ENCODE measurements at regions of chr3 and their contacts with region 1.

Region 1: DNA sequence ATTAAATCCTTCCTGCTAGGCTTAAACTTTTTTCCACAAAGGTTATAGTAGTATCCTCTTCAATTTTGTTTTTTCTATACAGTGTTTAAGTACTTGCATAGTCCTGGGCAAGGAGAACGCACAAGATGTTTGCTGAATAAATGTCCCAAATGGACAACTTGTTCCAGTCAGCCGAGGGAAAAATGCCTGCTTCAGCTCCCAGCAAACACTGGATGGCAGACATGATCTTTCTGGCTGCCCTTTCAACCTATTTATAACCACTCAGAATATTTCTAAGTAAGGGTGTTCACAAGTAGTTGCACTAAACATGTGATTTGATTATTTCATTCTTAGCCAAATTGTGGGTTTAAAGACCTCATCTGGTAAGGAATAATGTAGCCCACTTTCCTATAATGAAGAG is 29.8 kb downstream of the GNB4 start:
- DNase-seq: no peak
- ATAC-seq: peak; percentile 85

Region 2: DNA sequence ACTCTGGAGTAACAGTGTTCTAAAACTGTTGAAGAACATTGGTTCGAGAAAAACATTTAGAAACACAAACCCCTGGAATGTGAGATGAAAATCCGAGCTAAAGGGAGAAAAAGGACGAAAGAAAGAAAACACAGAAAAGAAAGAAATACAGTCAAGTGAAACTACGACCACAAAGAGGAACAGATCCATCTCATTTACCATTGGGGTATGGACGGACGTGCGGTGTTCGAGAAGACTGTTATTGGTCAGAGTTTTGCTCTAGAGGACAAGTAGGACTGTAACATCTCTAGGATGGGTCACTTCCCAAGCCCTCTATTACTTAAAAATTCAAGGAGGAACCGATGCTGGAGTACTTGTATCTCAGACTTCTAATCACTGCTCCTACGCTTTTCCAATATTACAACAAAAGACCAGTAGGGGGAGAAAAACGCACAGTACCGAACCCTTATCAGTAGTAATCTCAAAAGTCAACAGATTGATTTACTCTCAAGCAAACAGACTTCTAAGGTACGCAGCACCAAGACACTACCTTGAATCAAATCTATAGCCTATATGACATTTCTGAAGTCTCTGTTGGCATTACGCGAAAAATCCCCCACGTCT is 274.5 kb before region 1 on chr3:
- intact Hi-C with region 1: no loop called
- DNase-seq: no peak
- ATAC-seq: peak; percentile 71

Region 3: DNA sequence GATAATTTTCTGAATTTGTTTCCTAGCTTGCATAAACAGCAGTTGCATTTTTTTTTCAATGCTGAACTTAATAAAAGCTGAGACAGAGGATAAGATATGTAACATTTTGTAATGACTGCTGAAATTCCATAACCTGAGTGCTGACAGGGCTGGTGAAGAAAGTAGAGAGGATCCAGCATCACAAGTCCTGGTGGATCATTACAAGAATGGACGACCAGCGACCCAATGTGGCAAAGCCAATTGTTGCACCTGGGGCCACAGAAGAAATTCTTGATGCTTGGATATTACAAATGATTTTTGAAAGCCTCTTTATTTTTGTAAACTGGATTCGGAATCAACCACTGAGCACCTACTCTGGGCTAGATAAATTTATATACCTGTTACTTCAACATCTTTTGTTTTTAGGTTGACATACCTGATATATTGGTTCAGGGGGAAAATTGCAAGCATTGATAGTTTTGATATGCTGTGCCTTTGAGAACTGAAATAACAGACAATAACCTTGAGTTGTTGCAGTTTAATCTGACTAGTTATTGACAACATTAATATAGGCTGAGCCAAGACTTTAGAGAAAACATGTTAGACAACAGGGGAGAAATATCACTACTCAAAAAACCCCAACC is 137.4 kb after region 1 on chr3:
- intact Hi-C with region 1: loop called (anchors 1 kb)
- DNase-seq: peak; percentile 60
- ATAC-seq: no peak